Heart left ventricle (tissue), 16 donors: ENCODE measurements at regions of chr1 and their contacts with region 1.

Region 1: GRCh38 chr1:230310381-230311163 is 115.6 kb downstream of the PGBD5 start:
- DNase-seq: peak; percentile 67 to 82 (median 71)
- ATAC-seq: peak; percentile 75 to 88 (median 86)
- H3K4me3 ChIP-seq: no peak overlapping the region
- H3K27ac ChIP-seq: no peak overlapping the region
- H3K4me1 ChIP-seq: peaks cover 0 to 16% (median 1%) of the 10 kb centered on the region in 12 donors
- H3K27me3 ChIP-seq: peaks cover 0 to 9% (median 0%) of the 10 kb centered on the region in 9 donors
- CTCF ChIP-seq: peak; percentile 85 to 96 (median 92)
- POLR2A ChIP-seq: no peak

Region 2: DNA sequence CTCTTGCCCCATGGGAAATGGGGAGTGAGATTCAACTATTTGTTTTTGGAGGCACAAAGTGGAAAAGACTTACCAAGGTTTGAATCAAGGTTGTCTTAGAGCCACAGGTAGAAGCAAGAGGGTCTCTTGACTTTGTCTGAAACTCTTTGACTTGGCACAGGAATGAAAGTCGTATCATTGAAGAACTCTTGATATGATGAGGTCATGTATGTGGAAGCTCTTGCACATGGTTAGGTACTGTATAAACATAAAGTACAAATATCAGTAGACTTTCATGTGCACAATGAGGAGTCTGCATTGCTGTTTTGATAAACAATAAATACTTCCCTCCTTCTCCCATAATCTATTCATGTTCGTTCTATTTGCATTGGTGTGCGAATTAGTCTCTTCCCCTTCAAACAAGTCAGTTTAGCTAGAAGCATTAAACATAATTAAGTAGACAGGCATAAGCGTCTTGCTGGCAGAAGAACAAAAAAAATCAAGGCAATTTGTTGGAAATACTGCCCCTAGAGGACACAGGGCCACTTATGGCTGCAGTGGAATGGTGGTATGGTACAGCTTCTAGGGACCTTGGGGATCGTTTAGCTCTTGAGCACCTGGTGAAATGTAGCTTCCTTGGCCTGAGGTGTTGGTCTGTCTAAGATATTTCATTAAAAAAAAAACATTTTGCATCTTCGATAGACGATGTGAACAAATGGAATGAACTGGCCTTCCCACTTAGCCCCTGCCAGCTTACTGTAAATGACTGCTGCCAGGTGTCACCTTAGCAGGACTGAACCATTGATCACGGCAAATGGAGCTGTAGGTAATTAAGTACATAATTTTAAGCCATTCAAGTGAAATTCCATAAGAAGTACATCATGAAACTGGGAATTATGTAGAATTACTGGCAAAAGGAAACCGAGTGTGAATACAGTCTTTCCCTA is 461.6 kb before region 1 on chr1:
- intact Hi-C with region 1: loop called in 1 of 10 experiments (anchors 10 kb)
- DNase-seq: no peak
- ATAC-seq: no peak
- H3K4me3 ChIP-seq: no peak overlapping the region
- H3K27ac ChIP-seq: no peak overlapping the region
- H3K4me1 ChIP-seq: peaks cover 0 to 11% (median 3%) of the 10 kb centered on the region in 12 donors
- H3K27me3 ChIP-seq: no peaks in the 10 kb centered on the region
- CTCF ChIP-seq: peak in 11 of 12 donors; percentile 18 to 52 (median 35)
- POLR2A ChIP-seq: no peak

Region 3: DNA sequence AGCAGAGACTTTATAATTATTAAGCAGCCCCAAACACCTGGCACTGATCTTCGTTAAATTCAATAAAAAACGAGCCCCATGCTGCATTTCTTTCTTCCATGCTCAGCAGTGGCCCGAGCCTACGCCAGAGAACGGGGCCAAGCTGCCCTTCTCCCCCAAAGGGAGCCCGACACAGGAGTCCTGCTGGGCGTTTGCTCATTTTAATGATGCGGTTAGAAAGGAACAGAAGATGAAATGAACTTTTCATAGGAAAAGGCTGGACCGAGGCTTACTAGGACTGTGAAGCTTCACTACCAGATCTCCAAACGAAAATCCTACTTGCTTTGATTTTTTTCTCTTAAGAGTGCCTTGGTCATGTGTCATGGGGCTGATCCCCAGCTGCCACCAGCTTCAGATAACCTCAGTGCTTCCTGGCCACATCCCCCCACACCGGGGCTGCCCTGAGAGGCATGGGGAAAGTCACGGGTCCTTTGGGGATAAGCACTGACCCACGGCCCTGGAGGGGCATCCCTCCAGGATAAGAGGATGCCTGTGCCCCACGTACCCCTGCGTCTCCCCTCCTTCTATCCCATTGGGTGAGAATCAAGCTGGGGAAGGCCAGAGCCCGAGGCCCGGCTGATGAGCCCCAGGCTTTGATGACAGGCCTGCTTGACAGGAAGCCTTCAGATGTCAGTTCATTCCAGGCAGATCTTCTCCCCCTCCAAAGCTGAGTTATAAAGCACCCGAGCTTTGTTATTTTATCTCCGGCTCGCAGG is 81.4 kb after region 1 on chr1:
- intact Hi-C with region 1: no loop called
- DNase-seq: no peak
- ATAC-seq: no peak
- H3K4me3 ChIP-seq: no peak overlapping the region
- H3K27ac ChIP-seq: no peak overlapping the region
- H3K4me1 ChIP-seq: peaks cover 0 to 15% (median 4%) of the 10 kb centered on the region in 12 donors
- H3K27me3 ChIP-seq: peaks cover 0 to 4% (median 0%) of the 10 kb centered on the region in 9 donors
- CTCF ChIP-seq: no peak
- POLR2A ChIP-seq: no peak

Region 4: GRCh38 chr1:230407351-230407750 is 96.8 kb after region 1 on chr1:
- intact Hi-C with region 1: no loop called
- DNase-seq: no peak
- ATAC-seq: no peak
- H3K4me3 ChIP-seq: no peak overlapping the region
- H3K27ac ChIP-seq: no peak overlapping the region
- H3K4me1 ChIP-seq: no peaks in the 10 kb centered on the region
- H3K27me3 ChIP-seq: no peaks in the 10 kb centered on the region
- CTCF ChIP-seq: no peak
- POLR2A ChIP-seq: no peak